HepG2 (cell line): ENCODE measurements at regions of chr22 and their contacts with region 1.

Region 1: GRCh38 chr22:17057959-17058814 is 26.6 kb upstream of the IL17RA start:
- DNase-seq: peak; percentile 57
- ATAC-seq: peak; percentile 97
- H3K4me3 ChIP-seq: no peak overlapping the region
- H3K27ac ChIP-seq: no peak overlapping the region
- H3K4me1 ChIP-seq: no peaks in the 10 kb centered on the region
- H3K27me3 ChIP-seq: peaks cover 0 to 15% of the 10 kb centered on the region in 2 experiments; a peak in 2 of 5 replicates
- CTCF ChIP-seq: peak; percentile 92
- EP300 ChIP-seq: no peak
- POLR2A ChIP-seq: no peak
- RAD21 ChIP-seq: peak; percentile 54

Region 2: GRCh38 chr22:16917144-16918003 is 140.8 kb before region 1 on chr22:
- CTCF ChIA-PET with region 1: interaction called, 17 read pairs
- POLR2A ChIA-PET with region 1: no interaction called
- in situ Hi-C with region 1: loop called (anchors 5 kb)
- intact Hi-C with region 1: loop called (anchors 1 kb)
- DNase-seq: peak; percentile 57
- ATAC-seq: peak; percentile 95
- H3K4me3 ChIP-seq: no peak overlapping the region
- H3K27ac ChIP-seq: no peak overlapping the region
- H3K4me1 ChIP-seq: no peaks in the 10 kb centered on the region
- H3K27me3 ChIP-seq: no peaks in the 10 kb centered on the region; a peak in 2 of 5 replicates
- CTCF ChIP-seq: peak; percentile 71
- EP300 ChIP-seq: no peak
- POLR2A ChIP-seq: no peak
- RAD21 ChIP-seq: no peak

Region 3: GRCh38 chr22:16933291-16934282 is 124.6 kb before region 1 on chr22:
- CTCF ChIA-PET with region 1: no interaction called
- POLR2A ChIA-PET with region 1: no interaction called
- in situ Hi-C with region 1: no loop called
- intact Hi-C with region 1: loop called (anchors 1 kb)
- DNase-seq: no peak
- ATAC-seq: no peak
- H3K4me3 ChIP-seq: no peak overlapping the region
- H3K27ac ChIP-seq: no peak overlapping the region
- H3K4me1 ChIP-seq: no peaks in the 10 kb centered on the region
- H3K27me3 ChIP-seq: no peaks in the 10 kb centered on the region
- CTCF ChIP-seq: no peak
- EP300 ChIP-seq: no peak
- POLR2A ChIP-seq: no peak
- RAD21 ChIP-seq: no peak

Region 4: GRCh38 chr22:17302616-17303015 is 244.4 kb after region 1 on chr22:
- CTCF ChIA-PET with region 1: no interaction called
- POLR2A ChIA-PET with region 1: no interaction called
- in situ Hi-C with region 1: no loop called
- intact Hi-C with region 1: no loop called
- DNase-seq: no peak
- ATAC-seq: no peak
- H3K4me3 ChIP-seq: no peak overlapping the region
- H3K27ac ChIP-seq: no peak overlapping the region
- H3K4me1 ChIP-seq: peaks cover 10% of the 10 kb centered on the region
- H3K27me3 ChIP-seq: 0 out of 5 replicates have a peak, but pooled peaks cover 0 to 4% of the 10 kb centered on the region in 2 experiments
- CTCF ChIP-seq: no peak
- EP300 ChIP-seq: no peak
- POLR2A ChIP-seq: no peak
- RAD21 ChIP-seq: no peak